GM12878 (cell line): ENCODE measurements at regions of chr12 and their contacts with region 1.

Region 1: DNA sequence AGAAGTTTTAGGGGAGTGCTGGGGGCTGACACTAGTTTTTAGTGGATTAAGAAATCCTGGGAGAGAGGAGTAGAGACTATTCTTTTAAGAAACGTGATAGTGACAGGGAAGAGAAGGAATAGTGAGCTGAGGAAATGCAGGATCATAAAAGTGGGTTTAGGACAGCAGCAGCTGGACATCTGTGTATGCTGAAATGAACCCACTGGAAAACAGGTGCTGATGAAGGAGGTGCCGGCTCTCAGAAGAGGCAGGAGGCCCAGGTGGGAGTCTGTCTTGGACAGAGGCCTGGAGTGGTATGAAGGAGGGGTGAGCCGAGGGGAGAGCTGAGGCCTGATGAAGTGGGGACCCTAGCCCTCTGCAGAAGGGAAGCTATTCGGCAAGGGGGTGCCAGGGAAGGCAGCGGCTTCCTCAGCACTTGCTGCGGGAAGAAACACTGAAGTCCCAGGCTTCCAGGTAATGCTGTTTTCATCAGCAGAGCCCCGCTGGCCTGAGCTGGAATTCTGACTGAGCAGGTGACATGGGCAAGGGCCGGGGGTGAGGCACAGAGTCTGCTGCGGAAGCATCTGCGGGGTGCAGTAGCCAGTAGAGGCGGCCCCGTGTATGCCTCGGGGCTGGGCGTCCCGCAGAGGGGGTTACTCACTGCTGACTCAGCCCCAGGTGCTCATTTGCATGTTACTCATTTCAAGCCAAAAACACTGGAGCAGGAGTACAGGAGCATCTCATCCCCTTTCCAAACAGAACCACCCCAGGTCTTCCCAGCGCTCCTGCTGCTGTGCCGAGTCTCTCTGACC is 89.7 kb downstream of the TMCC3 start:
- DNase-seq: peak; percentile 36
- ATAC-seq: peak; percentile 83
- H3K4me3 ChIP-seq: no peak overlapping the region
- H3K27ac ChIP-seq: peak overlapping the region; percentile 15; the same call in 1 of the 2 replicates
- H3K4me1 ChIP-seq: peaks cover 27% of the 10 kb centered on the region
- H3K27me3 ChIP-seq: no peaks in the 10 kb centered on the region
- CTCF ChIP-seq: no peak
- EP300 ChIP-seq: no peak; a peak in 1 of 4 replicates
- POLR2A ChIP-seq: peak; percentile 61
- RAD21 ChIP-seq: no peak

Region 2: DNA sequence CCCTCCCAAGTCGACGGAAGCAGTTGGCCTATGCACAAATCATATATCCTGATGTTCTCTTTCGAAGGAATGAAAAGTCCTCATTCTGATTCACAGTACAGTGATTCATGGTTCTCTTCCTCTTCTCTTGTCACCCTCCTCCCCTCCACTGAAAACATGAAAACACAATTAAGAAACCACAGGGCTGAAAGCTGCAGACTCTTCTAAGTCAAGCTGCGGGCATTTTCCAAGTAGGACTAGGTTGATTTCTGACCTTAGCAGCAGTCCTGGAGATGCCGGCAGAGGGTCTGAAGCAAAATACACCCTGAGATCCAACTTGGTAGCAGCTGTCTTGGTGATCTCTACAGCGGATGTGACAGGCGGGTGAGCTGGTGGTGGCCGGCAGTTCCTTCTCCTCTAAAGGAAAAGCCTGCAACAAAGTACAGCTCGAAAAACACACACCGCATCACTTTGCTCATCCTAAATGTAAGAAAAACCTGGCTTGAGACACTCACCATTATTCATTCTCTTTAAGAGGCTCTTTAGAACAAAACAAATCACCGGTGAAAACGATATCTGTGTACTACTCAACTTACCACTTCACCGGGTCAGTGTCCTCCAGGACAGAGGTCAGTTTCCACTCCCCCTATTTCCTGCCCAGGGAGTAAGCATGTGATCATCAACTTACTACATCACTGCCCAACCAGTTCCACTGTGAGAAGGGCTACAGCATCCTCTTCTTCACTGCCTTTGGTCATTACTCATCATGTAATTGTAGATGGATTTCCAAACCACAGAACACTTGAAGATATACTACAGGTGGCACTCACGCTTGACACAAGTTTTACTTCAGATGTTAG is 83.7 kb after region 1 on chr12:
- CTCF ChIA-PET with region 1: no interaction called
- POLR2A ChIA-PET with region 1: no interaction called
- RAD21 ChIA-PET with region 1: interaction called, 3 read pairs
- SMC1A ChIA-PET with region 1: interaction called, 4 read pairs
- in situ Hi-C with region 1: no loop called
- intact Hi-C with region 1: loop called (anchors 5 kb)
- DNase-seq: peak; percentile 49
- ATAC-seq: peak; percentile 76
- H3K4me3 ChIP-seq: no peak overlapping the region
- H3K27ac ChIP-seq: peak overlapping the region; percentile 9; the same call in 1 of the 2 replicates
- H3K4me1 ChIP-seq: peaks cover 30% of the 10 kb centered on the region
- H3K27me3 ChIP-seq: no peaks in the 10 kb centered on the region
- CTCF ChIP-seq: no peak
- EP300 ChIP-seq: no peak
- POLR2A ChIP-seq: no peak
- RAD21 ChIP-seq: no peak